ENCODE measurements at regions of chr7 and their contacts with region 1.

Region 1: DNA sequence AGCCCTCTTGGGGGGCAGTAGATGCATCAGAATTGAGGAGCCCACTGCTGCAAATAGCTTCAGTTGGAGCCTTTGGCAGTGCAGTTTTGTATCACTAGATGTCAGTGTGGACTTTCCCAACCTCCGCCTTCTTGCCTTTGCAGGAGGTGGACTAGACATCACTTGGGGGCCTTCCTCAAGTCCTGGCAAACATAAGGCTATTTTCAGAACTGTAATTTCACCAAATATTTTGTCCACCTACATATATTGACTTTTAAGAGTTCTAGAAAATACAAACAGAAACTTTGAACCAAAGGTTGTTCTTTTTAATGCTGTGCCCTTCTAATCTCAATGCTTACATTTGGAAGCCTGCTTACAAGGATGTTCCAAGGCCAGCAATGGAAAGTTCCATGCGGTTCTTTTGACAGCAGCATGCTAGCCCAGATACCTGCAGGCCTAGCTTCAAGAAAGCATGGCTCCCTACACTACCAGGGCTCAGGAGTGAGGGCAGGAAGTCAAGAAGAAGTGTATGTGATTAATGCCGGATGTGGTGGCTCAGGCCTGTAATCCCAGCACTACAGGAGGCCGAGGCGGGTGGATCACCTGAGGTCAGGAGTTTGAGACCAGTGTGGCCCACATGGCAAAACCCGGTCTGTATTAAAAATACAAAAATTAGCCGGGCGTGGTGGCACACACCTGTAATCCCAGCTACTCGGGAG is 8.0 kb upstream of the ZNRF2 start:
- DNase-seq: peak in 1 of 2 donors; percentile 11
- ATAC-seq: peak in 1 of 2 donors; percentile 53
- H3K4me3 ChIP-seq: no peak overlapping the region
- H3K27ac ChIP-seq: no peak overlapping the region
- H3K4me1 ChIP-seq: peaks cover 14 to 18% of the 10 kb centered on the region in 2 donors
- H3K27me3 ChIP-seq: no peaks in the 10 kb centered on the region
- CTCF ChIP-seq: peak; percentile 18 to 62 (median 49)
- POLR2A ChIP-seq: no peak

Region 2: DNA sequence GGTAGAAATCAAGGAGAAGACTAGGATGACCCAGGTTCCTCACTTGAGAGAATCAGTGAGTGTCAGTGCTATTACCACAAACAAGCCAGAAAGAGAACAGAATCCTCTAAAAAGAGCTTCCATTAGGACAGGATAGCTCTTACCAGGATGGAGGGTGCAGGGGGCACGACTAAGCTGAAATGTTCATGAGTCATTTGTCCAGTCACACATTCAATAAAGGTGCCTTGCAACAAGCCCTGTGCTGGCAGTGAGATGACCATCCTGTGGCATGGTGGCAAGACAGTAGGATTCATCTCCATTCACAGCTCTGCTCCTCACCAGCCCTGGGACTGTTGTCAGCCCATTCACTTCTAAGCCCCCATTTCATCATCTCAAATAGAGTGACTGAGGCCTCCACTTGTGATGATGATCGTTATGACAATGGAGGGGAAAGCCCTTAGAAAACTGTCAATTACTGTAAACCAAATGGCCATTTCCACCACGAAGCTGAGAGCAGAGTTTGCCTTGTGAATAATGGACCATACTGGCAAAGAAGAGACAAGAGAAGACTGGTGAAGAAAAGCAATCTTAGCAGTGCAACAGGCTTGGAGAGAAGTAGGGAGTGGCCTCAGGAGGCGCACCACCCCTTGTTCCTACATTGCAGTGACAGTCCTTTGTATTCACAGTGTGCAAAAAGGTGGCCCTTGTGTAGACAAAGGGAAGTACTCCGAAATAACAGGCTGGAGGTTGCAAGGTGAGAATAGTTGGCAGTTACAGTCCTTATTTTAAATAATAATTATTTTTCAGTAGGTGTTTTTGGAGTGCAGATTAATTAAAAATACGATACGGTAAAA is 479.0 kb before region 1 on chr7:
- in situ Hi-C with region 1: no loop called
- intact Hi-C with region 1: no loop called
- DNase-seq: no peak
- ATAC-seq: no peak
- H3K4me3 ChIP-seq: no peak overlapping the region
- H3K27ac ChIP-seq: no peak overlapping the region
- H3K4me1 ChIP-seq: no peaks in the 10 kb centered on the region
- H3K27me3 ChIP-seq: no peaks in the 10 kb centered on the region
- CTCF ChIP-seq: no peak
- POLR2A ChIP-seq: no peak

Region 3: DNA sequence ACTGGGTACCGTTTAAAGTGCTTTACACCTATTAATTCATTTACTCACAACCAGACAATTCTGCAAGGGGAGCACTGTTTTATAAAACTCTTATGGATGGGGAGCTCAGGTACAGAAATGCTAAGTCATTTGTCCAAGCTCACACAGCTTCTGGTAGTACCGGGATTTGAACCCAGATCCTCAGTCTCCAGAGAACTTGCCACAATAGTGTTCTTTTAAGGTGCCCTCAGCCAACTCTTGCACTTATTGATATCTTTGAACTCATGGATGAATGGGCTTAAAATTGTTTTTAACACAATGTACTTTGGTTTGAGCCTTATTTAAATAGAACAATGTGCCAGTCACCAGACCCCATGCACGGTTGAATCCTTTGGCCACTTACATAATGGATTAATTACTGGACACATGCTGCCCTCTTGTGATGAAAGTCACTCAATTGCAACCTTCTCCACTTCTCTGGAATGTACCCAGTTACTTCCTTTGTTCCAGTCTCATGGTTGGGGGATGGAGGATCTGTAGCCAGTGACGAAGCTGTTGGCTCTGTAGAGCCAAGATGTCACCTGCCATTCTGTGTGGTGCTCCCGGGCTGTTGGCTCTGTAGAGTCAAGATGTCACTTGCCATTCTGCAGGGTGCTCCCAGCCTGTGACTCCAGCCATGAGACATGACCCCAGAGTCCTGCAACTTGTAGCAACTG is 136.6 kb after region 1 on chr7:
- in situ Hi-C with region 1: loop called in 2 of 4 experiments (anchors 5 kb)
- intact Hi-C with region 1: loop called (anchors 1 kb)
- DNase-seq: peak in 1 of 2 donors; percentile 47
- ATAC-seq: peak; percentile 94 to 97
- H3K4me3 ChIP-seq: no peak overlapping the region
- H3K27ac ChIP-seq: no peak overlapping the region
- H3K4me1 ChIP-seq: peaks cover 0 to 3% of the 10 kb centered on the region in 2 donors
- H3K27me3 ChIP-seq: no peaks in the 10 kb centered on the region
- CTCF ChIP-seq: peak; percentile 48 to 74 (median 62)
- POLR2A ChIP-seq: no peak

Measured in gastrocnemius medialis (tissue), 4 donors.